Activated B cell treated with CpG ODN at 0.5 μM for 24 hours (primary cell): ENCODE measurements at regions of chr14 and their contacts with region 1.

Region 1: DNA sequence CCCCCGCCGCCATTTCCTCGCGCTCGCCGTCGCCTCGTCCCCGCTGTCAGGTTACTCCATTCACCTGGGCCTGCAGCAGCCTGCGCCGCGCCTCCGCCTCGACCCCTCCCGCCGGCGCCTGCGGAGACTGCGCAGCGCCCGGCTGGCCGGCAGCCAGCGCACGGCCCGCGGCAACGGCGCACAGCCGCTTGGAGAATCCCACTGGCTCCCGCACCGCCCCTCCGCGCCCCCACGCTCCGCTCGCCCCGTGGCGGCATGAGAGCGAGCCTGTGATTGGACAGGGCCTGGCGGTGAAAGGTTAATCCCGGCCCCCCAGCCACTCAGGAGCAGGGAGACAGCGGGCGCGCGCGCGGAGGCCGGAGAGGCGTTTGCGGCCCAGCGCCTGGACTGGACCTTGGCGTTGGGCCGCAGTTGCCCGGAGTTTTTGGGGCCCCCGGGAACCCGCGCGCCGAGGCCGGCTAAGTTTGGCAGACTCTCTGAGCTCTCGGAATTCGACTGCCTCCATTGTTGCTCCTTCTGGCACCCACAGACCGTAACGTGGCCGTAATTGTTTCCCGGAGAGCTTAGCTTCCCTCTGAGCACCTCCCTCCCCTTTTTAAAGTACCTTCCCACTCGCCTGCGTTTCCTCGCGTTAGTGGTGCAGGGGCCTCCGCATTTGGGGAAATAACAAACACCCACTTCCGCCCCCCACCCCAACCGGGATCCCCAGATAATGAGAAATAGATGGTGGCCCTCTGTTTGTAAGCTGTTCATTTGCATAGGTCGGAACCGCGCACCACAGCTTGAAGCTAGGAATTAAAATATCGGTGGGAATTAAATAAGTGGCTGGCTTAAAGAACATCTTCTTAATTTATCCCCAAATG is at the start of gene DICER1:
- DNase-seq: peak; percentile 96
- ATAC-seq: peak; percentile 87
- H3K4me3 Mint-ChIP-seq: peak within 1 kb of the TSS; percentile 97
- H3K27ac Mint-ChIP-seq: peak within 1 kb of the TSS; percentile 100
- H3K4me1 Mint-ChIP-seq: peaks cover 45% of the 10 kb centered on the region
- H3K27me3 Mint-ChIP-seq: no peaks in the 10 kb centered on the region
- CTCF ChIP-seq: no peak
- total RNA-seq, gene DICER1: 67.3 and 69.6 TPM in 2 replicates

Region 2: GRCh38 chr14:95140060-95140858 is 17.3 kb before region 1 on chr14:
- CTCF ChIA-PET with region 1: interaction called, 3 read pairs
- POLR2A ChIA-PET with region 1: interaction called, 5 read pairs
- intact Hi-C with region 1: loop called (anchors 1 kb)
- DNase-seq: no peak
- ATAC-seq: peak; percentile 52
- H3K4me3 Mint-ChIP-seq: peak overlapping the region; percentile 64
- H3K27ac Mint-ChIP-seq: peak overlapping the region; percentile 78
- H3K4me1 Mint-ChIP-seq: peaks cover 79% of the 10 kb centered on the region
- H3K27me3 Mint-ChIP-seq: no peaks in the 10 kb centered on the region
- CTCF ChIP-seq: no peak

Region 3: GRCh38 chr14:95146079-95146771 is 11.3 kb before region 1 on chr14:
- CTCF ChIA-PET with region 1: interaction called, 3 read pairs
- POLR2A ChIA-PET with region 1: interaction called, 16 read pairs
- intact Hi-C with region 1: loop called (anchors 1 kb)
- DNase-seq: no peak
- ATAC-seq: peak; percentile 51
- H3K4me3 Mint-ChIP-seq: no peak overlapping the region
- H3K27ac Mint-ChIP-seq: peak overlapping the region; percentile 73
- H3K4me1 Mint-ChIP-seq: peaks cover 91% of the 10 kb centered on the region
- H3K27me3 Mint-ChIP-seq: no peaks in the 10 kb centered on the region
- CTCF ChIP-seq: no peak

Region 4: DNA sequence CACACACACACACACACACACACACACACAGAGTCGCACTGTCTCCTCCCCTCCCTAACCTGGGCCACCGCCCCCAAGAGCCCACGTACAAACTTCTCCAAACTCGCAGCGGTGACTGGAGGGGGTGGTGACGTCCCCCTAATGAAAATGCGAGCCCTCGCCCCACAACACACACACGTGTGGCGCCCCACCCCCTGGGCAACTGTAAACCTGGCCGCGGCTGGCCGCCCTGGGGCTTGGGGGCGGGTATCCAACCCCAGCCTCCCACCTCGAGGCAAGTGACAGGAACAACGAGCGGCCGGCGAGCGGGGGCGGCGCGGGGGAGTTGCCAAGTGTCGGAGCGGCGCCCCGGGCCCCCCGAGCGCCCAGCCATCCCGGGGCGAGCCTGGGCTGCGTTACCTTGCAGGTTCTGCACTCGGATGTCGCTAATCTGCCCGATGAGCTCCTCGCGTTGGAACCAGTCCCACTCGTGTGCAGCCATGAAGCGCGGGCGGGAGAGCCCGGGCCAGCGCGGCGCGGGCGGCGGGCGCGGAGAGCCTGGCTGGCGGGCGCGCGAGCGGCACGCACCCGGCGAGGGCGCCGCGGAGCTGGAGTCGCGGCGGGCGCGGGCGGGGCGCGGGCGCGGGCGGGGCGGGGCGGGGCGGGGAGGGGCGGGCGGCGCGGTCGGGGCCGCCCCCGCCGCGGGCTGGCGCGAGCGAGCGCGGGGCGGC is 161.9 kb after region 1 on chr14 and contains the start of gene CLMN:
- CTCF ChIA-PET with region 1: no interaction called
- POLR2A ChIA-PET with region 1: interaction called, 6 read pairs
- intact Hi-C with region 1: loop called (anchors 2 kb)
- DNase-seq: peak; percentile 58
- ATAC-seq: peak; percentile 72
- H3K4me3 Mint-ChIP-seq: peak within 1 kb of the TSS; percentile 87
- H3K27ac Mint-ChIP-seq: peak within 1 kb of the TSS; percentile 75
- H3K4me1 Mint-ChIP-seq: peaks cover 28% of the 10 kb centered on the region
- H3K27me3 Mint-ChIP-seq: no peaks in the 10 kb centered on the region
- CTCF ChIP-seq: no peak
- total RNA-seq, gene CLMN: 23.4 and 23.9 TPM in 2 replicates

Region 5: GRCh38 chr14:95327558-95328374 is 170.2 kb after region 1 on chr14:
- CTCF ChIA-PET with region 1: no interaction called
- POLR2A ChIA-PET with region 1: interaction called, 6 read pairs
- intact Hi-C with region 1: loop called (anchors 2 kb)
- DNase-seq: peak; percentile 48
- ATAC-seq: peak; percentile 84
- H3K4me3 Mint-ChIP-seq: peak overlapping the region; percentile 76
- H3K27ac Mint-ChIP-seq: peak overlapping the region; percentile 97
- H3K4me1 Mint-ChIP-seq: peaks cover 53% of the 10 kb centered on the region
- H3K27me3 Mint-ChIP-seq: no peaks in the 10 kb centered on the region
- CTCF ChIP-seq: no peak

Region 6: DNA sequence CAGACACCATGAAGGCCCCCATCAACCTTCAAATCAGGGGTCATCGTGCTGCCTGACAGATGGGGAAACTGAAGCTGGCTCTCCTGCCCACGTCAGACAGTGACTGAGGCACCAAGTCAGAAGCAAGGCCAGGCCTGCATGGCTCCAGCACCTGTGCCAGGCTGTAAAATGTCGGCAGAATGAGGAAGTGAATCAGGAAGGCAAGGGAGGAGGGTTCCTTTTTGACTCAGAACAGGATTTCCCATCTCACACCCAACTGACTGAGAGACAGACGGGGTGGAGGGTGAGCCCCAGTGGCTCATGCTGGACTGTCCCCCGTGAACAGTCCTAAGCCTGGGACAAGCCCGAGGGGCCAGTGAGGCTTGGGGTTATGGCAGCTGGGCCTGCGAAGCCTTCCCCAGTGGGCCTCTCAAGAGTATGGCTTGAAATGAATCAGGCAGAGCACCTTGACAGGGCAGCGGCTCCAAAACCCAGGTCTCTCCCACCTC is 338.0 kb after region 1 on chr14:
- CTCF ChIA-PET with region 1: no interaction called
- POLR2A ChIA-PET with region 1: no interaction called
- intact Hi-C with region 1: loop called (anchors 1 kb)
- DNase-seq: peak; percentile 60
- ATAC-seq: peak; percentile 87
- H3K4me3 Mint-ChIP-seq: peak overlapping the region; percentile 62
- H3K27ac Mint-ChIP-seq: peak overlapping the region; percentile 91
- H3K4me1 Mint-ChIP-seq: peaks cover 86% of the 10 kb centered on the region
- H3K27me3 Mint-ChIP-seq: no peaks in the 10 kb centered on the region
- CTCF ChIP-seq: no peak

Region 7: DNA sequence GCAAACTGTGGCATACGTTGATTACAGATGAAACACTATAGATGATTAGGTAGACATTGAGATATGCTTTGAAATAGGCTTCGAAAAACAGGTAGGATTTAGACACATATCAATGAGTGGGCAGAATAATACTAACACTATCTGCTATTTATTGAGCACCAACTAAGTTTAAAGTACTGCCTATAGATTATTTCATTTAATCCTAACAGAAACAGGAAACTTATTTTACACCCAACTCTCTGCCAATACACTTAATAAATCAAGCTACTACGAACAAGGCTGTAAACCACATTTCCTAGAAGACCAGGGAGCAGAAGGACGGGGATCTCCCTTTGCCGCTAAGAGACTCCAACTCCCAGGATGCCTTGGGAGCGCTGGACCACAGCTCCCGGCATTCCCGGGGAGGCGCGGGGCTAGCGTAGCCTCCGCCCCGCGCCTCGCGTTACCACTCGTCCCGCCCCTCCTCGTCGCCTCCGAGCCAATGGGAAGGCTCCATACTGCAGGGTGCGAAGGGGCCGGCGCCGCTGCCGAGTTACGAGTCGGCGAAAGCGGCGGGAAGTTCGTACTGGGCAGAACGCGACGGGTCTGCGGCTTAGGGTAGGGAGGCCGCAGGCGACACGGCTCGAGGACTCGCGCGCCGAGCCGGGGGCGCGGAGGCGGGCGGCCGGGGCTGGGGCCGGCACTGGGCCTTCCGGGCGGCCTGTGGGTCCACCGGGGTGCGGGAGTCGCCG is 1639.5 kb after region 1 on chr14 and contains the start of gene VRK1:
- CTCF ChIA-PET with region 1: no interaction called
- POLR2A ChIA-PET with region 1: no interaction called
- intact Hi-C with region 1: loop called (anchors 2 kb)
- DNase-seq: peak; percentile 92
- ATAC-seq: peak; percentile 98
- H3K4me3 Mint-ChIP-seq: peak within 1 kb of the TSS; percentile 87
- H3K27ac Mint-ChIP-seq: peak within 1 kb of the TSS; percentile 74
- H3K4me1 Mint-ChIP-seq: peaks cover 24% of the 10 kb centered on the region
- H3K27me3 Mint-ChIP-seq: peaks cover 18% of the 10 kb centered on the region
- CTCF ChIP-seq: no peak
- total RNA-seq, gene VRK1: 30.2 and 32.1 TPM in 2 replicates